Naive thymus-derived CD4-positive, alpha-beta T cell (primary cell): ENCODE measurements at regions of chr5 and their contacts with region 1.

Region 1: DNA sequence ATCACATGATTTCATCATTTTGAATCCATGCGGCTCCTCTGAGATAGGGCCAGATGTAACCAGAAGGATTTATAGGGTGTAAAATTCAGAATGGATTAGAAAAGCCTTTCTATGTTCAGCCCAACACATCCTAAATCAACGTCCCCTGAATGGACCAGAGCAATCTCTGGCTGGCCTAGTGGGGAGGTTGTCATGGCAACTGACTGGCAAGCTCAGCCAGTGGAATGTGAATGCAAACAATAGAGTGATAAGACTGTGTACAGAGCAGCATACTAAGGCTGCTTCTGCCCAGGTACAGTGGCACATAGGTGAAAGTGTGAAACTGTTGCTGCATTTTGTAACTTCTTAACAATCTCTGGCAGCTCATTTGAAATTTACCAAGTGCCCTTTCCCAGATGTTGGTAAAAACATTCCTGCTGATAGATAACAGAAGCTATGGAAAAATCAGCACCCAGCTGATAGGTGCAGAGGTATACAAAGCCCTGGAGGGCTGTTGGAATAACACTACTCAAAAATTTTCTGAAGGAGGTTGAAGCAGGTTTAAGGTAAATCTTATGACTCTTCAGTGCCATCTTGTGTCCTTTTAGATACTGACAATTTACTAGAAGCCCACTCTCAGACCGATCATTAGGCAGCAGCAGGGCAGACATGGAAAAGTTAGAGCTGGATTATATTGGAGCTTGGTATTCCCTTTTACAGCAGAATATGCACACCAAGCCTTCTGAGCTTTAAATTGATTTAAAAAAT is 267.2 kb downstream of the RAB3C start:
- DNase-seq: peak in 2 of 9 donors; percentile 2
- ATAC-seq: peak; percentile 49
- H3K4me3 ChIP-seq: no peak overlapping the region
- H3K4me3 Mint-ChIP-seq: no peak overlapping the region
- H3K27ac ChIP-seq: no peak overlapping the region
- H3K27ac Mint-ChIP-seq: no peak overlapping the region
- H3K4me1 ChIP-seq: no peaks in the 10 kb centered on the region
- H3K4me1 Mint-ChIP-seq: no peaks in the 10 kb centered on the region
- H3K27me3 ChIP-seq: no peaks in the 10 kb centered on the region
- H3K27me3 Mint-ChIP-seq: peaks cover 11 to 26% (median 21%) of the 10 kb centered on the region in 5 donors

Region 2: DNA sequence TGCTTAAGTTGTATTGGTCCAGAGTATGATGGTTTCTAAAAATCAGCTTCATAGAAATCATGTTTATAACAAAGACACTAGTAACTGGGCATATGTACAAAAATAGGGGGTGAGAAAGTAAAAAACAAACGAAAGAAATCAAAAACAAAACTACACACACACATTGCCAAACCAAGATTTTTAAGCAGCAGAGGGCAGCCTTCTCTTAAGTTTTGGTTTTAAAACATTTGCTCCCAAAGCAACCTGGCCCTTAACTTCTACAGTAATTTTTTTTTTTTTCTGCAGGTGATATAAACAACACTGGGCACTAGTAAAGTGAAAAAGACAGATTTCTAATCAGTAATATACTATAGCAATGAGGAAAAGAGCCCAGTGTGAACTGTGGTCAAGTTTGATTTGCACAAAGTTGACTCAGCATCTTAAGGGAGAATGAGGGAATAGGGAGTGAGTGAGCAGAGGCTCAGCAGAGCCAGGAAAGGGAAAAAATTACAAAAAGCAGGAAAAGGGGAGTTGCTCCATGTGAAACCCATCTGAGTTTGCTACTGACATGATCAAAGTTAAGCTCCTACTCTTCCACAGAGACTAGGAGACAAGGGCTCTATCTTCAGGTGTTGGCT is 372.2 kb before region 1 on chr5:
- CTCF ChIA-PET with region 1: interaction called, 3 read pairs
- POLR2A ChIA-PET with region 1: no interaction called
- intact Hi-C with region 1: loop called (anchors 5 kb)
- DNase-seq: no peak
- ATAC-seq: no peak
- H3K4me3 ChIP-seq: no peak overlapping the region
- H3K4me3 Mint-ChIP-seq: no peak overlapping the region
- H3K27ac ChIP-seq: no peak overlapping the region
- H3K27ac Mint-ChIP-seq: no peak overlapping the region
- H3K4me1 ChIP-seq: no peaks in the 10 kb centered on the region
- H3K4me1 Mint-ChIP-seq: peaks cover 0 to 4% (median 0%) of the 10 kb centered on the region in 7 donors
- H3K27me3 ChIP-seq: no peaks in the 10 kb centered on the region
- H3K27me3 Mint-ChIP-seq: peaks cover 0 to 12% (median 6%) of the 10 kb centered on the region in 5 donors

Region 3: DNA sequence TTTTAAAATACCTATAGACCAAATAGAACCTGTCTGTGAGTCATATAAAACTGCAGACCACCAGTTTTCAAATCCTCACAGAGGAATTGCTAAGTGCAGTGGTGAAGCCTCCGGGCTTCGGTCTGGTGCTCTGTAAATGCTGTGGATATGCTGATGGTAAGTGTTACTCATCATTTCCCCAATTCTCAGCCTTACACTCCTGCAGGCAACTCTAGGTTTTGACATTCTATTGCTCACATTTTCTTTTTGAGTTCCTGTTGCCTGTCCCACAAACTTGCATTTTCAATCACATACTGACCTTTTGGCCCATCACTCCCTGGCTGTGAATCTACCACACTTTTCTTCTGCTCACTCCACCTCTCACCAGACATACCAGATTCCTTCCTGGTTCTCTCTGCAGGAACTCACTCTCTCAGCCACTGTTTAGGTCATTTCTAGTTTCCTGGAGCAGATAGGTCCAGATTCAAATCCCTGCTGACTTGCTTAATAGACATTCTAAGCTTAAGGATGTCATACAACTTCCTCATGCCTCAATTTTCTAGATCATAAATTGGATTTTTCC is 74.3 kb before region 1 on chr5:
- CTCF ChIA-PET with region 1: no interaction called
- POLR2A ChIA-PET with region 1: no interaction called
- intact Hi-C with region 1: no loop called
- DNase-seq: no peak
- ATAC-seq: peak; percentile 58
- H3K4me3 ChIP-seq: no peak overlapping the region
- H3K4me3 Mint-ChIP-seq: no peak overlapping the region
- H3K27ac ChIP-seq: no peak overlapping the region
- H3K27ac Mint-ChIP-seq: no peak overlapping the region
- H3K4me1 ChIP-seq: no peaks in the 10 kb centered on the region
- H3K4me1 Mint-ChIP-seq: peaks cover 0 to 3% (median 0%) of the 10 kb centered on the region in 7 donors
- H3K27me3 ChIP-seq: no peaks in the 10 kb centered on the region
- H3K27me3 Mint-ChIP-seq: peaks cover 3 to 20% (median 10%) of the 10 kb centered on the region in 5 donors